CD8-positive, alpha-beta memory T cell (primary cell): ENCODE measurements at regions of chr14 and their contacts with region 1.

Region 1: DNA sequence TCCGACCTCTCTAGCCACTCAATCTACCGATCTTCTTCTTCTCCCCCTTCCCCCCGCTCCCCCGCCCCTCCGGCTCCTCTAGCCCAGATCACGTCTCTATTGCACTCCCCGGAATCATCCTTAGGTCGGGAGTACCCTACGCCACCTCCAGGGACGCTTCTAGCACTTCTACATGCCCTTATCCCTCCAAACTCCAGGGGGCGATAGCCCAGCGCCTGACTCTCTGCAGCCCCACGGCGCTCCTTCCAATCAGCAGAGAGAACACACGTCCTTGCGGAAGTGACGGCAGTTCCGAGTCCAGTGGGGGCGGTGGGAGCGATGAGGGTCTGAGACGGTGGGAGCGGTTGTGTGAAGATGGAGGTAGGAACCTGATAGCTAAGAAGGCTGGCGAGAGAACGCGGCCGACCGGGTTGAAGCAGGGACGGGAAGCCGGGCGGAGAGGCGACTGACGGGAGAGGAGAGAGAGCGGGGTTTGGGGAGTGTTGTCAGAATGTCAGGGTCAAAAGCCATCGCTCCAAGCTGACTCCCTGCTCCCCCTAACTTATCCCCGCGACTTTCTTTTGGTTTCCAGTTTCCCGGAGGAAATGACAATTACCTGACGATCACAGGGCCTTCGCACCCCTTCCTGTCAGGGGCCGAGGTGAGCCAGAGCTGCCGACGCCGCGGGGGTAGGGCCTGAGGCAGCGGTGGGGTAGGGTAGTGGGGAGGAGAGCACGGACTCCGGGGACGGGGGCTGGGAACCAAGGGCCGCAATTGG is at the starts of genes RAB2B and TOX4:
- DNase-seq: peak; percentile 89 to 98 (median 97)
- H3K4me3 ChIP-seq: peak within 1 kb of the TSS; percentile 98
- H3K4me3 Mint-ChIP-seq: peak within 1 kb of the TSS; percentile 95 to 100 (median 98)
- H3K27ac ChIP-seq: peak within 1 kb of the TSS; percentile 94
- H3K27ac Mint-ChIP-seq: peak within 1 kb of the TSS; percentile 90 to 100 (median 100)
- H3K4me1 ChIP-seq: peaks cover 25% of the 10 kb centered on the region
- H3K4me1 Mint-ChIP-seq: peaks cover 32 to 74% (median 64%) of the 10 kb centered on the region in 3 donors
- H3K27me3 ChIP-seq: no peaks in the 10 kb centered on the region
- H3K27me3 Mint-ChIP-seq: no peaks in the 10 kb centered on the region
- total RNA-seq, gene RAB2B: 25.5 to 25.7 TPM
- total RNA-seq, gene TOX4: 82.7 to 83.0 TPM

Region 2: GRCh38 chr14:21437063-21437901 is 39.8 kb before region 1 on chr14:
- CTCF ChIA-PET with region 1: interaction called, 15 read pairs
- POLR2A ChIA-PET with region 1: interaction called, 9 read pairs
- DNase-seq: peak; percentile 97 to 99 (median 98)
- H3K4me3 ChIP-seq: peak overlapping the region; percentile 91
- H3K4me3 Mint-ChIP-seq: peak overlapping the region; percentile 91 to 97 (median 95)
- H3K27ac ChIP-seq: peak overlapping the region; percentile 82
- H3K27ac Mint-ChIP-seq: peak overlapping the region; percentile 84 to 98 (median 95)
- H3K4me1 ChIP-seq: peaks cover 34% of the 10 kb centered on the region
- H3K4me1 Mint-ChIP-seq: peaks cover 61 to 81% (median 79%) of the 10 kb centered on the region in 3 donors
- H3K27me3 ChIP-seq: no peaks in the 10 kb centered on the region
- H3K27me3 Mint-ChIP-seq: no peaks in the 10 kb centered on the region

Region 3: DNA sequence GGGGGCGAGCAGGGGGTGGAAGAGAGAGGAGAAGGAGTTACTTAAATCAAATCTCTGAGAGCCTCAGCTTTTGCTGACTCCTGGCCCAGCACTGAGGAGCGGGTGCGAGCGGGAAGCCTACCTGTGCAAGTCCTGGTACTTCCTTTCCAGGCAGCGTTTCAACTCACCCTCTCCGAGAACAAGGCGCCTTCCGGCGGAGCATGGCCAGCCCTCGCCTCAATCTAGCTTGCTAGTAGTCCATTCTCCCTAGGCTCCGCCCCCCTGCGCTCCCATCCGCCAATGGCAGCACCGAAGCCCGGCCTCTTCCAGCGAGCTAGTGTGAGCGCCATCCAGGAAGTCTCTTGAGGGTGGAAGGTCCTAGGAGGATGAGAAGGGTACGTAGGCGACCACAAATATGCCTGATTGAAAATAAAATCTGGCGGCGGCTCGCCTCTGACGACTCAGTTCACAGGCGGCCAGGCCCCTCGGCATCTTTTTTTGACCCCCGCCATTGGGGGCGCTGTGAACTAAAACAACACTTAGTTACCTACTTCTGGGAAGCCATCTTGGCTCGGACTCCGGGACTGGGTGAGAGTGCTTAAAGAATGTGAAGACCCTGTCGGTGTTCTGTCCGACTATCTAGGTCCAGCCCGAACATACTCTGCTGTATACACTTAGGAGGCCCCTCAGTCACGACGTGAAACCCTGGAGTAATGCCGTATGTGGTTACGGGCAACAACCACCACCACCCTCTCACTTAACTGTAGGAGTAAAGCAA is 21.0 kb before region 1 on chr14 and contains the start of gene CHD8:
- CTCF ChIA-PET with region 1: interaction called, 11 read pairs
- POLR2A ChIA-PET with region 1: interaction called, 28 read pairs
- DNase-seq: peak; percentile 99 to 100 (median 100)
- H3K4me3 ChIP-seq: peak within 1 kb of the TSS; percentile 96
- H3K4me3 Mint-ChIP-seq: peak within 1 kb of the TSS; percentile 94 to 99 (median 97)
- H3K27ac ChIP-seq: peak within 1 kb of the TSS; percentile 93
- H3K27ac Mint-ChIP-seq: peak within 1 kb of the TSS; percentile 92 to 99 (median 98)
- H3K4me1 ChIP-seq: peaks cover 37% of the 10 kb centered on the region
- H3K4me1 Mint-ChIP-seq: peaks cover 34 to 43% (median 42%) of the 10 kb centered on the region in 3 donors
- H3K27me3 ChIP-seq: no peaks in the 10 kb centered on the region
- H3K27me3 Mint-ChIP-seq: no peaks in the 10 kb centered on the region
- total RNA-seq, gene CHD8: 90.0 to 96.1 TPM

Region 4: DNA sequence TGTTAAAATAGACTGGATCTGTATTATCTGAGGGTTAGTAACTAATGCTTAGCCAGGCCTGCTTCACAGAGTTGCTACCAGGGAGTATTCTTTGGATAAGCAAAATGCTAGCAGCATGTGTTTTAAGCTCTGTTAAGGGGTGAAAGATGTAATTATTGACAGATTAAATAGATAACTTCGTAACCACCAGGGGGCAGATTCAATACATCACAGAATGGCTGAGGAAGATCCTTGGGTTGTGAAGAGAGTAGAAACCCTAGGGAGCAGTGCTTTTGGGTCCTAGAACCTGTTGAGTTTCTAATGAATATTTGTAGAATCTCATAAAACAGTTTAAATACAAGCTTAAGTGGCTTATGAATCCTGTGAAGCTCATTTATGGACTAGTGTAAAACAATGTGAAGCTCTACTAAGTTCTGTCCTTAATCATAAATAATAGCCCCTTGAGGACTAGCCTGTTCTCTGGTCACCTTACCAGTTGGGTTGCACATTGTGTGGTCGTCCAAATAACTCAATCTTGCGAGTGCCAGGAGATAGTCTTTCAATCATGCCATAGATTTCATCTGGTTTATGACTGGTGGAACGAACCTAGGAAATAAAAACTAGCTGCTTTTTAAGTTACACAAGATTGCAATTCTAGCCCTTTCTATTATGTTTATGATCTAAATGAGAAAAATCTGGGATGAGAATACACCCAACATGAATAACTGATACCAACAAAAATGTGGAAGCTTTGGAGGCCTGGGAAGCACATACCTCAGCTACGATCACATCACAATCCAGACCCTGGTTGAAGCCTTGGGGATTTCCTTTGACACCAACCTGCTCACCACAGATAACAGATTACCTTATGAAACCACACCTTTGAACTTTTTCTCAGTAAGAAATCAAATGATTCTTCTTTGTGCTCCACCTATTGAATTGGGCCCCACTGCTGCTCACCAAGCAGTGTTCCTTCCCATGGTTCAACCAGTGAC is 21.7 kb after region 1 on chr14:
- CTCF ChIA-PET with region 1: interaction called, 22 read pairs
- POLR2A ChIA-PET with region 1: no interaction called
- DNase-seq: peak in 3 of 5 donors; percentile 10 to 53 (median 39)
- H3K4me3 ChIP-seq: no peak overlapping the region
- H3K4me3 Mint-ChIP-seq: no peak overlapping the region
- H3K27ac ChIP-seq: no peak overlapping the region
- H3K27ac Mint-ChIP-seq: peak overlapping the region in 7 of 8 donors; percentile 8 to 85 (median 68)
- H3K4me1 ChIP-seq: peaks cover 13% of the 10 kb centered on the region
- H3K4me1 Mint-ChIP-seq: peaks cover 13 to 27% (median 25%) of the 10 kb centered on the region in 3 donors
- H3K27me3 ChIP-seq: no peaks in the 10 kb centered on the region
- H3K27me3 Mint-ChIP-seq: no peaks in the 10 kb centered on the region

Region 5: GRCh38 chr14:21510735-21511657 is 33.9 kb after region 1 on chr14 and contains the start of gene METTL3:
- CTCF ChIA-PET with region 1: interaction called, 14 read pairs
- POLR2A ChIA-PET with region 1: interaction called, 12 read pairs
- DNase-seq: peak; percentile 88 to 97 (median 91)
- H3K4me3 ChIP-seq: peak within 1 kb of the TSS; percentile 100
- H3K4me3 Mint-ChIP-seq: peak within 1 kb of the TSS; percentile 97 to 100 (median 99)
- H3K27ac ChIP-seq: peak within 1 kb of the TSS; percentile 95
- H3K27ac Mint-ChIP-seq: peak within 1 kb of the TSS; percentile 92 to 99 (median 99)
- H3K4me1 ChIP-seq: peaks cover 18% of the 10 kb centered on the region
- H3K4me1 Mint-ChIP-seq: peaks cover 31 to 46% (median 45%) of the 10 kb centered on the region in 3 donors
- H3K27me3 ChIP-seq: no peaks in the 10 kb centered on the region
- H3K27me3 Mint-ChIP-seq: peaks cover 0 to 3% of the 10 kb centered on the region in 2 donors
- total RNA-seq, gene METTL3: 54.1 to 58.9 TPM